ENCODE measurements at regions of chr21 and their contacts with region 1.

Region 1: GRCh38 chr21:25790122-25790877 is 55.5 kb downstream of the GABPA start:
- DNase-seq: peak; percentile 19
- H3K4me3 Mint-ChIP-seq: peak overlapping the region; percentile 60
- H3K27ac Mint-ChIP-seq: peak overlapping the region; percentile 26
- H3K4me1 Mint-ChIP-seq: peaks cover 10% of the 10 kb centered on the region
- H3K27me3 Mint-ChIP-seq: peaks cover 9% of the 10 kb centered on the region

Region 2: DNA sequence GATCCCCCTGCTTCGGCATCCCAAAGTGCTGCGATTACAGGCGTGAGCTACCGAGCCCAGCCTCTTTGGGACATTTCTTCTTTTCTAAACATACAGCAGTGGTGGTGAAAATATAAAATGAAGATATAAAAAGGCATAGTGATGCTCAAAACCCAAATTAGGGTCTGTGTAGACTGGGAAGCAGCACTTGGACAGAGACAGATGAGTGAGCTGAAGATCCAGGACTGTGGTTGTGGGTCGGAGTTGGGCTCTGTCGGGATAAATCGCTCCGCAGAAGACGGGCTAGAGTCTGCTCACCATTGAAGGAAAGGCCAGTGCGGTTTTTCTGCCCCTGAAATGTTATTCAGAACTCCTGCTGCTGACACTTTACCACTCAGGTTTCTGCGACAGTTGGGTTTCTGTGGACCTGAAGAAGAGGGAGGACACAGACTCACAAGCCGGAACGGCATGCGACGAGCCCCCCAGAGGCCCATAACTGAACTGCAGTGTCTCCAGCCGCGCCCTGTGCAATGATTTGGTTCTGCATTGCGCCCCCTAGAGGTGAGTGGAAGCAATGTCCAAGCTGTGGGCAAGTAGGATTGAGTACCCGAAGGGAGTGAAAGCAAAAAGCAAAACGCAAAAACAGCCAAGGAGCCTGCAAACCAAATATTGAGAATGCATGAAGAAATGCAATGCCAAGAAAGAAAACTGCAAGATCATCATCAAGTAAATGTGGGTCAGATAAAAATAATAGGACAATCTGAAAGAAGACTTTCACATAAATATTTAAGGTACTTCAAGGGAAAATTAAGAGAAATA is 11.1 kb after region 1 on chr21:
- CTCF ChIA-PET with region 1: interaction called, 25 read pairs
- POLR2A ChIA-PET with region 1: no interaction called
- intact Hi-C with region 1: loop called (anchors 1 kb)
- DNase-seq: peak; percentile 93
- H3K4me3 Mint-ChIP-seq: no peak overlapping the region
- H3K27ac Mint-ChIP-seq: no peak overlapping the region
- H3K4me1 Mint-ChIP-seq: peaks cover 6% of the 10 kb centered on the region
- H3K27me3 Mint-ChIP-seq: peaks cover 16% of the 10 kb centered on the region

Region 3: DNA sequence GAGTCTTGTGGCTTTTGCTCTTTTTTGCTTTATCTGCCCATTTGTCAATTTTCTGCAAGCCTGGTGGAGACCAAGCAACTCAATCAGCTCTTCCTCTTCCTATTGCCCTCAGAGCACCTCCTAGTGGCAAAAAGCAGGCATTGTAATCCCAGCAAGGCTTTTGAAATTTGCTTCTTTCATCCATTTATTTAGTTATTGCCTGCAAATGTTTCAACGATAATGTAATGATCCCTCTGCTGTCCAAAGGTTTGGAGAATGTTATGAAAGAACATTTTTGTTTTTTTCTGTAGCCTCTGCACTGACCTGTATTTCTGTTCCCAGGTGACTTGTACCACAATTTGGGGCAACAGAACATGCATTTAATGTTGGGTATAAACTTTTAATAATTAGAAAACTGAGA is 72.3 kb after region 1 on chr21:
- CTCF ChIA-PET with region 1: interaction called, 9 read pairs
- POLR2A ChIA-PET with region 1: no interaction called
- intact Hi-C with region 1: loop called (anchors 1 kb)
- DNase-seq: peak; percentile 36
- H3K4me3 Mint-ChIP-seq: no peak overlapping the region
- H3K27ac Mint-ChIP-seq: no peak overlapping the region
- H3K4me1 Mint-ChIP-seq: no peaks in the 10 kb centered on the region
- H3K27me3 Mint-ChIP-seq: peaks cover 3% of the 10 kb centered on the region